ENCODE measurements at regions of chr17 and their contacts with region 1.

Region 1: GRCh38 chr17:60065136-60065535 is 13.6 kb downstream of the HEATR6 start:
- DNase-seq: no peak
- ATAC-seq: no peak
- H3K4me3 ChIP-seq: no peak overlapping the region
- H3K27ac ChIP-seq: no peak overlapping the region
- H3K4me1 ChIP-seq: no peaks in the 10 kb centered on the region
- H3K27me3 ChIP-seq: no peaks in the 10 kb centered on the region
- CTCF ChIP-seq: no peak
- POLR2A ChIP-seq: no peak

Region 2: DNA sequence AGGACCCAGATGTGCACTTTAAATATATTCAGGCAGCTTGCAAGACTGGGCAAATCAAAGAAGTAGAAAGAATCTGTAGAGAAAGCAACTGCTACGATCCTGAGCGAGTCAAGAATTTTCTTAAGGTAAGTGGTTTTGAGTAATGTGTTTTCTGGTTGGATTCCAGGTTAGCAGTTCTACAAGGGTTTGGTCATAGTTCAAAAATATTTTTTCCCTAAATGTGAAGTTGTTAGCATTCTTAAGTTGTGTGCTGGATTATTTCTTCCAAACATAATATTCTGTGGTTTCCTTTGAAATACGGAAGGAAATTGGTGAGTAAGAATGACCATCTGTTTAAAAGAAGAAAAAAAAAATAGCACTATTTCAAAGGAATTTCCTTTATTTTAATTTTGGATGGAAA is 396.3 kb before region 1 on chr17:
- in situ Hi-C with region 1: loop called in 1 of 4 experiments (anchors 25 kb)
- intact Hi-C with region 1: no loop called
- DNase-seq: no peak
- ATAC-seq: no peak
- H3K4me3 ChIP-seq: no peak overlapping the region
- H3K27ac ChIP-seq: no peak overlapping the region
- H3K4me1 ChIP-seq: peaks cover 7 to 15% of the 10 kb centered on the region in 2 donors
- H3K27me3 ChIP-seq: no peaks in the 10 kb centered on the region
- CTCF ChIP-seq: no peak
- POLR2A ChIP-seq: no peak

Region 3: DNA sequence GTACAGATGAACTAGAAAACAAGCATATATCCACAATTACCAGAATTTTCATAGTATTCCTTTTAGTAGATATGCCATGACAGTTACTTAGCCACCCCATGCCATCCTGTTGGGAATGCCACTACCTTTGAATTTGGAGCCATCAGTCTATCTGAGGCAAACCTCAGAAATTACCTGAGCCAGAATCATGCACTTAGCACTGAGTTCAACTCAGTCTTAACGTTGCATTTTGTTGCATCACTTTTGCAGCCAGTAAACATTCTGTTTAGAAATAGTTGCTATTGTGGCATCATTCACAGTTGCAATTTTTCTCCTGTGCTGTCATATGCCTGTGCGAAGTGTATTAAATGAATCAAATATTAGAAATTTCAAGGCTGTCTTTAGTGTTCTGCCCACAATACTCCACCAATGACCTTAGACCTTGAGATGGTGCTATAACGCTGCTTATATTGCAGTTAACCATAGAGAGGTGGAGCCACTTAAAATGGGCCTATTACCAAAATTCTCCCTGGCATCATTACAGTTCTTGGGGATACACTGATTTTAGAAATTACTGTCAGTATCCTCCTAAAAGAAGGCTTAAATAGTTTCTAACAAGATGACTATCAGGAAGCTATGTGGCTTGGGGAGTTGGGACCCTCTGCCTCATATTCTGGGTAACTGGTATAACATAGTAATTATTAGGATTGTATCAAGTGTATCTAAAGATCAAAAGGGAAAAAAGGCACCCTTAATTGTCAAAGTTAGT is 369.0 kb before region 1 on chr17:
- in situ Hi-C with region 1: loop called in 1 of 4 experiments (anchors 25 kb)
- intact Hi-C with region 1: no loop called
- DNase-seq: no peak
- ATAC-seq: no peak
- H3K4me3 ChIP-seq: no peak overlapping the region
- H3K27ac ChIP-seq: no peak overlapping the region
- H3K4me1 ChIP-seq: no peaks in the 10 kb centered on the region
- H3K27me3 ChIP-seq: no peaks in the 10 kb centered on the region
- CTCF ChIP-seq: no peak
- POLR2A ChIP-seq: no peak

Region 4: GRCh38 chr17:60154616-60155426 is 89.7 kb after region 1 on chr17:
- in situ Hi-C with region 1: no loop called
- intact Hi-C with region 1: no loop called
- DNase-seq: no peak
- ATAC-seq: peak; percentile 37 to 38
- H3K4me3 ChIP-seq: no peak overlapping the region
- H3K27ac ChIP-seq: peak overlapping the region in 3 of 4 donors; percentile 35 to 58 (median 50)
- H3K4me1 ChIP-seq: peaks cover 4 to 7% of the 10 kb centered on the region in 2 donors
- H3K27me3 ChIP-seq: peaks cover 23 to 44% (median 26%) of the 10 kb centered on the region in 3 donors
- CTCF ChIP-seq: no peak
- POLR2A ChIP-seq: no peak

Region 5: GRCh38 chr17:60188759-60189158 is 123.6 kb after region 1 on chr17:
- in situ Hi-C with region 1: loop called in 1 of 4 experiments (anchors 25 kb)
- intact Hi-C with region 1: no loop called
- DNase-seq: no peak
- ATAC-seq: no peak
- H3K4me3 ChIP-seq: no peak overlapping the region
- H3K27ac ChIP-seq: no peak overlapping the region
- H3K4me1 ChIP-seq: no peaks in the 10 kb centered on the region
- H3K27me3 ChIP-seq: no peaks in the 10 kb centered on the region
- CTCF ChIP-seq: no peak
- POLR2A ChIP-seq: no peak

Region 6: GRCh38 chr17:60435244-60436167 is 370.4 kb after region 1 on chr17:
- in situ Hi-C with region 1: loop called in 1 of 4 experiments (anchors 25 kb)
- intact Hi-C with region 1: no loop called
- DNase-seq: peak; percentile 60 to 63
- ATAC-seq: peak; percentile 84 to 91
- H3K4me3 ChIP-seq: peak overlapping the region in 2 of 4 donors; percentile 14 to 46
- H3K27ac ChIP-seq: peak overlapping the region in 1 of 4 donors; percentile 53
- H3K4me1 ChIP-seq: peaks cover 4 to 5% of the 10 kb centered on the region in 2 donors
- H3K27me3 ChIP-seq: no peaks in the 10 kb centered on the region
- CTCF ChIP-seq: peak; percentile 89 to 94 (median 92)
- POLR2A ChIP-seq: no peak

Measured in gastrocnemius medialis (tissue), 4 donors.